PC-9 (cell line): ENCODE measurements at regions of chr17 and their contacts with region 1.

Region 1: GRCh38 chr17:41060052-41060604 is at the start of gene KRTAP2-3:
- DNase-seq: peak; percentile 64 to 93
- H3K4me3 ChIP-seq: no peak within 1 kb of the TSS
- H3K27ac ChIP-seq: peak within 1 kb of the TSS; percentile 88
- H3K4me1 ChIP-seq: peaks cover 47% of the 10 kb centered on the region
- H3K27me3 ChIP-seq: no peaks in the 10 kb centered on the region
- CTCF ChIP-seq: no peak
- total RNA-seq, gene KRTAP2-3: 0.57 TPM in 1 of 2 replicates, not detected in the other

Region 2: GRCh38 chr17:40268141-40268712 is 791.9 kb before region 1 on chr17:
- CTCF ChIA-PET with region 1: no interaction called
- POLR2A ChIA-PET with region 1: no interaction called
- intact Hi-C with region 1: no loop called
- DNase-seq: no peak
- H3K4me3 ChIP-seq: no peak overlapping the region
- H3K27ac ChIP-seq: no peak overlapping the region
- H3K4me1 ChIP-seq: no peaks in the 10 kb centered on the region
- H3K27me3 ChIP-seq: no peaks in the 10 kb centered on the region
- CTCF ChIP-seq: no peak

Region 3: DNA sequence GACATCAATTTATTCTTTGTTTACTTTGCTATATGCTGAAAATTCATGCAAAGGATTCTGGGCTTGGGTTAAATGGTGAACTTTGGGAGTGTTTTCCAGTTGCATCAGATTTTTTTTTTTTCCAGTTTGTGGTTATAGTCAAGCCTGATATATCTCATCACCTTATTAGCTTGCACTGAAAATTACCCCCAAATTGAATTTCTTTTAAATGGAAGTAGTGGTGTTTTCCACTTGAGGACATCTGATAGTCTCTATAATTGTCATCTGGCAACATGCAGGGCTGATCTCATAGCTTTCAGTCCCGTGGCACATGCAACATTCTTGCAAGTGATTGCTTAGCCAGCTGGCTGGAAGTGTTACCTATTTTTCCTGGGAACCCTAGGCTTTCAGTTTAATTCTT is 46.5 kb before region 1 on chr17:
- CTCF ChIA-PET with region 1: no interaction called
- POLR2A ChIA-PET with region 1: no interaction called
- intact Hi-C with region 1: no loop called
- DNase-seq: no peak
- H3K4me3 ChIP-seq: no peak overlapping the region
- H3K27ac ChIP-seq: peak overlapping the region; percentile 85
- H3K4me1 ChIP-seq: peaks cover 71% of the 10 kb centered on the region
- H3K27me3 ChIP-seq: no peaks in the 10 kb centered on the region
- CTCF ChIP-seq: no peak

Region 4: GRCh38 chr17:41096055-41096454 is 35.9 kb after region 1 on chr17:
- CTCF ChIA-PET with region 1: no interaction called
- POLR2A ChIA-PET with region 1: no interaction called
- intact Hi-C with region 1: no loop called
- DNase-seq: no peak
- H3K4me3 ChIP-seq: no peak overlapping the region
- H3K27ac ChIP-seq: no peak overlapping the region
- H3K4me1 ChIP-seq: peaks cover 29% of the 10 kb centered on the region
- H3K27me3 ChIP-seq: no peaks in the 10 kb centered on the region
- CTCF ChIP-seq: no peak

Region 5: DNA sequence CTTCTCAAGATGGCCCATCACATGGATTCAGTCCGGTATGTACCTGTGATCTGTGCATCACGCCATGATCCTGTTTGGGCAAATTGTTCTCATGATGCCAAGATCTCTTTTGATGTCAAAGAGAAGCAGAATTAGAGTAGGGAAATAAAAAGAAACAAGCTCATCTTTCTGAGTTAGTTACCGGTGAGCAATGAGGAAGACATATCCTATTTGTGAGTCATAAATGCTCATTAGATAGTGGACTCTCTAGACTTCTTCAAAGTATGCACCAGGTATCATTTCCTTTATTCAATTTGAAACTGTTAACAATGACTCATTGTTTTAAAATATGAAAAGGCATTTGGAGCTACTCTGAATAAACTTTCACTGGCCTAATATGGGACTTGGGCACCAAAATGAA is 71.9 kb after region 1 on chr17:
- CTCF ChIA-PET with region 1: no interaction called
- POLR2A ChIA-PET with region 1: no interaction called
- intact Hi-C with region 1: loop called (anchors 2 kb)
- DNase-seq: peak; percentile 20 to 93
- H3K4me3 ChIP-seq: no peak overlapping the region
- H3K27ac ChIP-seq: peak overlapping the region; percentile 87
- H3K4me1 ChIP-seq: peaks cover 21% of the 10 kb centered on the region
- H3K27me3 ChIP-seq: no peaks in the 10 kb centered on the region
- CTCF ChIP-seq: no peak

Region 6: GRCh38 chr17:41147531-41148204 is 87.5 kb after region 1 on chr17:
- CTCF ChIA-PET with region 1: no interaction called
- POLR2A ChIA-PET with region 1: no interaction called
- intact Hi-C with region 1: no loop called
- DNase-seq: no peak
- H3K4me3 ChIP-seq: no peak overlapping the region
- H3K27ac ChIP-seq: no peak overlapping the region
- H3K4me1 ChIP-seq: no peaks in the 10 kb centered on the region
- H3K27me3 ChIP-seq: no peaks in the 10 kb centered on the region
- CTCF ChIP-seq: no peak

Region 7: DNA sequence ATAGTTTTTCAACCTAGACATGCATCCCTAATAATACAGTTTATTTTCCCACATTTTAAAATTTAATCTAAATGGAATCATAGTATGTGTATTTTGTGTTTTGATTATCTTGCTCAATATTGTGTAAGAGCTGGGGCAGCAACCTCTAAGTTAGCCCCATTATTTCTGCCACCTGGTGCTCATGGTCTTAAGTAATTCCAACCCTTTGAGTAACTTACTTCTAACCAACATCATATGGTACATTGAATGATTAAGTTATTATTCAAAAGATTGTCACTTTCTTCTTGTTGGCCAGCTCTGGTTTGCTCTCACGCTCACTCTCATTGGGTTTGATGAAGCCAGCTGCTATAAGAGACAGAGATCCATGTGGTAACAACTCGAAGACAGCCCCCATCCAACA is 111.8 kb after region 1 on chr17:
- CTCF ChIA-PET with region 1: no interaction called
- POLR2A ChIA-PET with region 1: interaction called, 10 read pairs
- intact Hi-C with region 1: no loop called
- DNase-seq: no peak
- H3K4me3 ChIP-seq: no peak overlapping the region
- H3K27ac ChIP-seq: no peak overlapping the region
- H3K4me1 ChIP-seq: no peaks in the 10 kb centered on the region
- H3K27me3 ChIP-seq: no peaks in the 10 kb centered on the region
- CTCF ChIP-seq: no peak

Region 8: DNA sequence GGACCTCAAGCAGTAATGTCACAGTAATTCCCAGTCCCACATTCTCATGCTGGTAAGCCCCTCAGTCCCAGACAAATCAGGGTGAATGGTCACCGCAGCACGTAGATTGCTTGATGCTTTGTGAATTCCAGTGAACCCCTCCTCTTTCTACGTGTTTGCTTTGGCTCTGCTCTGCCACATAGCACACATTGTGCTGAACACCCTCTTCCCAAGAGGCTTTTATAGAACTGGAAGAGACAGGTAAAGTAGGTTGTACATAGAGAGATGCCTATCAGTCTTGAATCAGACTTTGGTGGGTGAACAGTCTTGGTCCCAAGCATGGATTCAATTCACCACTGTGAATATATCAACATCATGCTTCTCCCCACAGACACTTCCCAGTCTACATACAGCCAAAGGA is 204.5 kb after region 1 on chr17:
- CTCF ChIA-PET with region 1: no interaction called
- POLR2A ChIA-PET with region 1: interaction called, 20 read pairs
- intact Hi-C with region 1: no loop called
- DNase-seq: no peak
- H3K4me3 ChIP-seq: no peak overlapping the region
- H3K27ac ChIP-seq: no peak overlapping the region
- H3K4me1 ChIP-seq: peaks cover 12% of the 10 kb centered on the region
- H3K27me3 ChIP-seq: no peaks in the 10 kb centered on the region
- CTCF ChIP-seq: no peak